Mammary epithelial cell (primary cell): ENCODE measurements at regions of chr3 and their contacts with region 1.

Region 1: DNA sequence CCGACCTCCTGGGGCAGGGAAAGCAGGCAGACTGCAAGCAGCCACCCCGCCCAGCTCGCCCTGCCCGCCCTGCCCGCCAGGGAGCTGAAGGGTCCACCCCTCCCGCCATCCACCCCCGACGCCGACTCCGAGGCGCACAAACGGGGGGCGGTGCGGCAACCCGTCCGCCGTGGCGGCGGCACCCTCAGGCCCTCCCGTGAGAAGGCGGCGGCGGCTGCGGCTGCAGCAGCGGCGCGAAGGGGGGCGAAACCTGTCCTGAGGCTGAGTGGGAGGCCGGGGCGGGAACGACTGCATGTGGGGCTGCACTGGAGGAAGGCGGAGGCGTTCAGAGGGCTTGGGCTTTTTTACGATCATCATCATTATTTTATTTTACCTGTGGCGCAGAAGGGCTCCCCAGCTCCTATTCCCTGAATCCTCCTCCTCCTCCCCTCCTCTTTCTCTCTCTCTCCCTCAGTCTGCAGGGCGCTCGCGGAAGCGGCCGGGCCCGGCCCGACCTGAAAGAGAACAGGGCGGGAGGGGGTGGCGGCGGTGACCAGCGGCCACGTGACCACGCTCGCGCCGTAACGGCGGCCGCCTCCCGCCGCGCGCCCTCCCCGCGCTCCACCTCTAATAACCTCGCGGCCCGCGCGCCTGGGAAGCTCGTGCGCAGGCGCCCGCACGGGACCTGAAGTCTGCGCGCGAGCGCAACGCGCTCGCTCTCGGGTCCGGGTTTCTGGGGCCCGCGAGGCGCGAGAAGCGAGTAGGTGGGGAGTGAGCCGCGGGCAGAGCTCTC is at the start of gene TBC1D5:
- DNase-seq: peak; percentile 99
- H3K4me3 ChIP-seq: peak within 1 kb of the TSS; percentile 82 to 86 (median 86)
- H3K27ac ChIP-seq: peak within 1 kb of the TSS; percentile 87
- H3K4me1 ChIP-seq: peaks cover 21% of the 10 kb centered on the region
- H3K27me3 ChIP-seq: no peaks in the 10 kb centered on the region
- CTCF ChIP-seq: no peak
- total RNA-seq, gene TBC1D5: 35.0 to 59.7 TPM

Region 2: GRCh38 chr3:17831366-17831765 is 89.1 kb after region 1 on chr3:
- CTCF ChIA-PET with region 1: no interaction called
- dilution Hi-C with region 1: no loop called
- in situ Hi-C with region 1: no loop called
- intact Hi-C with region 1: loop called (anchors 2 kb)
- DNase-seq: peak; percentile 53
- H3K4me3 ChIP-seq: no peak overlapping the region
- H3K27ac ChIP-seq: no peak overlapping the region
- H3K4me1 ChIP-seq: peaks cover 24% of the 10 kb centered on the region
- H3K27me3 ChIP-seq: no peaks in the 10 kb centered on the region
- CTCF ChIP-seq: no peak

Region 3: DNA sequence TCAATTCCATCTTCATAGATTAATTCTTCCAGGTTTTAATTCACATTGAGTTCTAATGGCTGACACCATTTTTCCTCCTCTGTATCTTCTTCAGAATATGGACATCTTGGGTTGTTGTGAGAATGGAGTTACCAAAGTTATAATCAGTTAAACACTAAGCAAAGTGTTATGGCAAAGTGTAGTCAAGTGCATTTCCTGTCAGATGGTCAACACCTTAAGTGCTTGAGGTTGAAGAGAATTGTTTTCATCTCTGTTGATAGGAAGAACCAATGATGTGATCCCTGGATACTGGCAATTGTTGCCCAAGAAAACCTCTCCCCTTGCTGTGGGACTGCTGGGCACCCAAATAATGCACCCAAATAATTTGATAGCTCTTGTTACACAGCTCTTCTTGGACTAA is 785.4 kb after region 1 on chr3:
- CTCF ChIA-PET with region 1: no interaction called
- dilution Hi-C with region 1: no loop called
- in situ Hi-C with region 1: no loop called
- intact Hi-C with region 1: no loop called
- DNase-seq: no peak
- H3K4me3 ChIP-seq: no peak overlapping the region
- H3K27ac ChIP-seq: no peak overlapping the region
- H3K4me1 ChIP-seq: no peaks in the 10 kb centered on the region
- H3K27me3 ChIP-seq: peaks cover 2% of the 10 kb centered on the region
- CTCF ChIP-seq: no peak